AG04450 (cell line): ENCODE measurements at regions of chr10 and their contacts with region 1.

Region 1: GRCh38 chr10:62437696-62438095 is 63.5 kb downstream of the ZNF365 start:
- DNase-seq: no peak
- H3K4me3 ChIP-seq: no peak overlapping the region
- H3K27ac ChIP-seq: no peak overlapping the region
- H3K27me3 ChIP-seq: no peaks in the 10 kb centered on the region
- CTCF ChIP-seq: peak; percentile 76

Region 2: GRCh38 chr10:62264702-62265436 is 172.8 kb before region 1 on chr10:
- CTCF ChIA-PET with region 1: interaction called, 19 read pairs
- POLR2A ChIA-PET with region 1: no interaction called
- DNase-seq: peak; percentile 70
- H3K4me3 ChIP-seq: no peak overlapping the region
- H3K27ac ChIP-seq: no peak overlapping the region
- H3K27me3 ChIP-seq: no peaks in the 10 kb centered on the region
- CTCF ChIP-seq: peak; percentile 73

Region 3: GRCh38 chr10:62451611-62451975 is 13.9 kb after region 1 on chr10:
- CTCF ChIA-PET with region 1: interaction called, 48 read pairs
- POLR2A ChIA-PET with region 1: no interaction called
- DNase-seq: no peak
- H3K4me3 ChIP-seq: no peak overlapping the region
- H3K27ac ChIP-seq: no peak overlapping the region
- H3K27me3 ChIP-seq: no peaks in the 10 kb centered on the region
- CTCF ChIP-seq: no peak

Region 4: DNA sequence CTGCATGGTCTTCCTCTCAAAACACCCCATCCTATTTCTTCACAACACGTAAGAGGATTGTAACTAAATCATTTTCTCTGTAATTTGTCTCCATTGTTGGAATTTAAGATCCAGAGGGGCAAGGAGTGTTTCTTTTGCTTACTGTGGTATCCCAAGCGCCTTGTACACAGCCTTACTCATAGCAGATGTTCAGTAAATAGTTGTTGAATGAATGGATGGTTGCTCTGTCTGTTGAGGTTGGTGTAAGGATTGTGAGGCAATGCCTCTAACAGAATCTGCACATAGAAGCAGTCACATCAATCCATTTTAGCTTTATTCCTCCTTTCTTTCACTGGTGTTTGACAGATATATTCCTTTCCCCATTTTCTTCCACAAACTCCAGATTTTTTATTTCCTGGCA is 26.6 kb after region 1 on chr10:
- CTCF ChIA-PET with region 1: interaction called, 45 read pairs
- POLR2A ChIA-PET with region 1: no interaction called
- DNase-seq: no peak
- H3K4me3 ChIP-seq: no peak overlapping the region
- H3K27ac ChIP-seq: no peak overlapping the region
- H3K27me3 ChIP-seq: no peaks in the 10 kb centered on the region
- CTCF ChIP-seq: no peak

Region 5: GRCh38 chr10:62541811-62542210 is 104.1 kb after region 1 on chr10:
- CTCF ChIA-PET with region 1: no interaction called
- POLR2A ChIA-PET with region 1: no interaction called
- DNase-seq: no peak
- H3K4me3 ChIP-seq: no peak overlapping the region
- H3K27ac ChIP-seq: no peak overlapping the region
- H3K27me3 ChIP-seq: no peaks in the 10 kb centered on the region
- CTCF ChIP-seq: no peak

Region 6: DNA sequence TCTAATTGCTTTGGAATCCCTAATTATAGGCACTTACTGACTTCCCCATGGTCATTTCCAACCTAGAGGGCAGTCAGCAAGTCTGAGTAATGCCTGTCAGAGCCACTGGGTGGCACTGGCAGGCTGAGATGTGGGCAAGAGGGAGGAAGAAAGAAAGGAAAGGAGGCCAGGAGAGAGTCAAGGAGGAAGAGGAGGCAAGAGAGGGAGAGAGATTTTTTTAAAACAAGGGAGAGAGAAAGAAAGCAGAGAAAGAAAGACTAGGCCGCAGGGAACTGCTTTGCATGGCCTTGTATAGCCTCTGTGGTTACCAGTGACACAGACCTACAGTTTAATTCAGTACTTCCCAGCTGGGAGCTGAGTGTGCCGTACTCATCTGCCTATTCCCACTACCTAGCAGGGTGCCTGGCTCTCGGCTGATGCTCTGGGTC is 156.4 kb after region 1 on chr10:
- CTCF ChIA-PET with region 1: interaction called, 28 read pairs
- POLR2A ChIA-PET with region 1: no interaction called
- DNase-seq: no peak
- H3K4me3 ChIP-seq: no peak overlapping the region
- H3K27ac ChIP-seq: no peak overlapping the region
- H3K27me3 ChIP-seq: no peaks in the 10 kb centered on the region
- CTCF ChIP-seq: peak; percentile 98

Region 7: GRCh38 chr10:62816331-62817120 is 378.8 kb after region 1 on chr10 and contains the start of gene EGR2:
- CTCF ChIA-PET with region 1: interaction called, 38 read pairs
- POLR2A ChIA-PET with region 1: no interaction called
- DNase-seq: peak; percentile 80
- H3K4me3 ChIP-seq: peak within 1 kb of the TSS; percentile 68
- H3K27ac ChIP-seq: peak within 1 kb of the TSS; percentile 39
- H3K27me3 ChIP-seq: peaks cover 48% of the 10 kb centered on the region
- CTCF ChIP-seq: no peak
- polyA plus RNA-seq, gene EGR2: 0.57 and 0.61 TPM in 2 replicates

Region 8: GRCh38 chr10:63145782-63146181 is 708.1 kb after region 1 on chr10:
- CTCF ChIA-PET with region 1: interaction called, 11 read pairs
- POLR2A ChIA-PET with region 1: no interaction called
- DNase-seq: no peak
- H3K4me3 ChIP-seq: no peak overlapping the region
- H3K27ac ChIP-seq: no peak overlapping the region
- H3K27me3 ChIP-seq: no peaks in the 10 kb centered on the region
- CTCF ChIP-seq: no peak